Posterior cingulate gyrus (tissue), 11 donors: ENCODE measurements at regions of chr12 and their contacts with region 1.

Region 1: DNA sequence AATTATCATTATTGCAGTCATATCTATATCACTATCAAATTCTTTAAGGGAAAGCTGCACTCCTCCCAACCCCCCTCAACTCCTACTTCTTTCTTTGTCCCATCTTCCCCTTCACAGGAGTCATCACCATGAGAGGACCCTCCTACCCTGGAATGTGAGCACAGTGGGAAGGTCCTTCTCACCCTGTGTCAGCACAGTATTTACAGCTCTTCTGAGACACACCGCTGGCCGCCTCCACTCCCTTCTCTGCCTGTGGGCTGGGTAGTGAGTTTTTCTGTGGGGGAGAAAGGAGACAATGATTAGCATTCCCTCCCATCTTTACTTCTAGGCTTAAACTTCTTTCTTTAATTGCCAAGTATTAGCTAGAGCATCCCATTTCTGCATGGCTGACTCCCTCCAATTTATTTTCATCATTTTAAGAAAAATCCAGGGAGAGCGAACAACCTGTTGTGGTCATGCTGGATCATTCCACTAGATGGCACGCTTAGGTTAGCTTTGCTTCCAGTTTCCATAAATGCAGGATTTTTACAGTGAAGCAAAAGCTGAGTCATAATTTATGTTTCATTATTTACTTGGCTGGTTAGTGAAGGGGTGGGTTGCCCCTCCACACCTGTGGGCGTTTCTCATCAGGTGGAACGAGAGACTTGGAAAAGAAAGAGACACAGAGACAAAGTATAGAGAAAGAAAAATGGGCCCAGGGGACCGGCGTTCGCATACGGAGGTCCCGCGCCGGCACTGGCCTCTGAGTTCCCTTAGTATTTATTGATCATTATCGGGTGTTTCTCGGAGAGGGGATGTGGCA is 188.5 kb downstream of the ALX1 start:
- DNase-seq: peak in 5 of 10 donors; percentile 35 to 76 (median 48)

Region 2: DNA sequence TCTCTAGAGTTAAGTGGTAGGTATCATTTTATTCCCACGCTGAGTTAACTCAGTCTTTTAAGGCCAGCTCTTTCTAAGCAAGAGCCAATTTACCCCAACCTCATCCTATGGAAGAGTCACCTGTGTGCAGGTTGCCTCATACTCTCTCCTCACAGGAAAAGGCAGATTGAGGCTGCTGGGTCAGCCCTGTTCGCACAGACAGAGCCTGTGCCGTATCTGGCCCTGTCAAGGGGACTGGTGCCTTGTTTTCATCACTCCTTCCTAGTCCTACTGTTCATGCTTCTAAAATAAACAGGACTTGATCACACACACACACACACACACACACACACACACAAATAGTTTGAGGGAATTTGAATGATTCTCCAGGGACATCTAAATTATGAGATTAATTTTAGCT is 841.0 kb before region 1 on chr12:
- intact Hi-C with region 1: no loop called
- DNase-seq: no peak

Region 3: DNA sequence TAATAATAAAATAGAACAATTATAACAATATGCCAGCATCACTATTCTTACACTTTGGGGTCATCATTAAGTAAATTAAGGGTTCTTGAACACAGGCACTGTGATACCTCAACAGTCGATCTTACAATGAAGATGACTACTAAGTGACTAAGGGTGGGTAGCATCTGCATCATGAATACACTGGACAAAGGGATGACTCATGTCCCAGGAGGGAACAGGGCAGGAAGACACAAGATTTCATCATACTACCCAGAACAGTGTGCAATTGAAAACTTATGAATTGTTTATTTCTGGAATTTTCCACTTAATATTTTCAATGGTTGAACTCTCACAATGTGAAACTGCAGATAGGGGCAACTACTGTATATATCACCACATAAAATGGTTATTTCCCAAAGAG is 452.1 kb before region 1 on chr12:
- intact Hi-C with region 1: no loop called
- DNase-seq: peak in 1 of 10 donors; percentile 26

Region 4: GRCh38 chr12:85872497-85873091 is 404.0 kb after region 1 on chr12:
- intact Hi-C with region 1: loop called (anchors 5 kb)
- DNase-seq: no peak

Region 5: DNA sequence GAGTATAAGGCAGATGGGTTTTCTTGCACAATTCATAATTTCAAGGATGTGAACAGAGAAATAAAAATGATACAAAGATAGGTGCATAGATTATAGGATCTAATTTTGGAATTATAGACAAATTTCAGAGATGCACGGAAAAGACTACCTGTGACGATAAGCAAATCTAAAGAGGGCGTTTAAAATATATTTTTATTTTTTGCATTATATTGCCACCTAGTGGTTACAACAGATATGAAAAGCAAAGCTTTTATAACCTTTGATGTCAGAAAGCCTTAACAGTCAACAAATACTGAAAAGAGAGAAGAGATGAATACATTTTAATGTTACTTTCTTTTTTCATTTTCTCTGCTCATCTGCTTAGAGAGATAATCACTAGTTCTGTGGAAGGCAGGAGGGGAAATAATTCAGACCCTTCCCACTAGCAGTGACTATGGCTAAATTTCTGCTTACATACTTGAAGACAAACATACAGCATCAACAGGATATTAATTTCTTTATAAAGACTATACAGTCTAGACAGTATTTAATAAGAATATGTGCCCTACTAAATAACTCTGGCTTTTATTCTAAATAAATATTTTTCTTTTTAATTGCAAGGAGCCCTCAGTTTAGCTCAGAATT is 451.9 kb after region 1 on chr12:
- intact Hi-C with region 1: loop called (anchors 2 kb)
- DNase-seq: no peak